MCF 10A (cell line): ENCODE measurements at regions of chr5 and their contacts with region 1.

Region 1: DNA sequence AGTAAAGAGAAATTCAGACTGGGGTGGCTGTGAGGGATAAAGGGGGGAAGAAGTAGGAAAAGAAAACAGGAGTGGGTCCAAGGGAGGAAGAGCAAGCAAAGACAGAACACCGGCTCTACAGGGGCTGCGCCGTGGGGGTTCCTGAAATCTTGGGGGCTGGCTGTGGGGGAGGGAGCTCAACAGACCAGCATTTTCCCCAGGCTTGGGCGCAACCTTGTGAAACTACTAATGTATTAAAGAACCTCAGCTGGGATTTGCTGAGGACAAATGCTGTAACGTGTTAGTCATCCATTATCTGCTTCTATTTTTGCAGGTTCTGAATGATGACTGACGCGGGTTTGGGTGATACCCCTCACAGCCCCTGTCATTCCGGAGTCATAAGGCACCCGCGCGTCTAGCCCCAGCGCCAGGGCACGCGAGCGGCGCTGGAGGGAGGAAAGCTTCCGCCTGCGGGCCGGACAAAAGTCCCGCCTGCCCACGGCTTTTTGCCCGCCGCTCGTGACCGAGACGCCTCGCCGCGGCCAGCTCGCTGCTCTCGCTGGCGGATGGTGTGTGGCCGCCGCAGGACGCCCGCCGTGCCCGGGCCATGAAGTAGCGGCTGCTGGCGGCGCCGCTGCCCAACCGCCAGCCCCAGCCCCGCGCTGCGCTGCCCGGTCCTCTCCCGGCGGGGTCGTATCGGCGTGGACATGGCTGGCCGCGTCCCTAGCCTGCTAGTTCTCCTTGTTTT is 110.6 kb downstream of the PAM start:
- DNase-seq: peak; percentile 68
- H3K4me3 Mint-ChIP-seq: peak overlapping the region; percentile 73
- H3K27ac Mint-ChIP-seq: peak overlapping the region; percentile 73
- H3K4me1 Mint-ChIP-seq: peaks cover 7% of the 10 kb centered on the region
- H3K27me3 Mint-ChIP-seq: no peaks in the 10 kb centered on the region
- CTCF ChIP-seq: no peak

Region 2: GRCh38 chr5:102971697-102972293 is 106.1 kb after region 1 on chr5:
- CTCF ChIA-PET with region 1: interaction called, 4 read pairs
- POLR2A ChIA-PET with region 1: interaction called, 3 read pairs
- intact Hi-C with region 1: loop called (anchors 10 kb)
- DNase-seq: peak; percentile 11
- H3K4me3 Mint-ChIP-seq: no peak overlapping the region
- H3K27ac Mint-ChIP-seq: no peak overlapping the region
- H3K4me1 Mint-ChIP-seq: no peaks in the 10 kb centered on the region
- H3K27me3 Mint-ChIP-seq: no peaks in the 10 kb centered on the region
- CTCF ChIP-seq: peak; percentile 32